Activated B cell treated with CpG ODN at 0.5 μM for 24 hours (primary cell): ENCODE measurements at regions of chr1 and their contacts with region 1.

Region 1: DNA sequence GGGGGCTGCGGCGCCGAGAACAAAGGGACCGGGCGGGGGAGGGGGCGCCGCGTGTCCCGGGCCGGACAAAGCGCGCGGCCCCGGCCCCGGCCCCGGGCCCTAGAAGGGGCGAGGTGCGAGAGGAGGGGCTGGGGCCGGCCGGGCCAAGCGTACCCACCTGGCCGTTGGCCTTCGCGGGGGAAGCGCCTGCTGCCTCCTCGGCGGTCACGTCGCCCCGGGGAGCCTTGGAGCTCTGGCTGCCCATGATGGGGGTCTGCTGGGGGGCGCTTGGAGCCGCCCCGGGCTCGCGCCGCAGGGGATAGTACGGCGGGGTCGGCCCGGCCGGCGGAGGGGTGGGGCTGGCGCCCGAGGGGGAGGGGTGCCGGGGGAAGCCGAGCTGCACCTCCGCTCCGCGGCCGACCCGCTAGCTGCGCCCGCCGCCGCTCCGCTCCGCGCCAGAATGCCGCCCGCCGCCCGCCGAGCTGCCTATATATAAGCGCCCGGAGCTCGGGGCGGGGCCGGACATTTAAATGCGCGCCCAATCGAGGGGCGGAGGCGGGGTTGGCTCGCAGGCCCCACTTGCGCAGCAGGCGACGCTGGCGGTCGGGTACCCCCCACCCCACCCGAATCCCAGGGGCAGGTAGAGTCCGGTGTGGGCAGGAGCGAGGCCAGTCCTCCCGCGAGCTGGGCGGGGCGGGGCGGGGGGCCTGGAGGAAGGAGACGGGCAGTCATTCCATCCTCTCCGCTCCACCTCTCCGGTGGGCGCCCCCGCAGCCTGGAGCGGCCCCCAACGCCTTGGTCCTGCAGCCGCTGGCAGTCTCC is at the start of gene MARCKSL1:
- DNase-seq: peak; percentile 90
- ATAC-seq: peak; percentile 54
- H3K4me3 Mint-ChIP-seq: peak within 1 kb of the TSS; percentile 86
- H3K27ac Mint-ChIP-seq: peak within 1 kb of the TSS; percentile 87
- H3K4me1 Mint-ChIP-seq: peaks cover 61% of the 10 kb centered on the region
- H3K27me3 Mint-ChIP-seq: no peaks in the 10 kb centered on the region
- CTCF ChIP-seq: no peak
- total RNA-seq, gene MARCKSL1: 132 TPM in 2 replicates

Region 2: DNA sequence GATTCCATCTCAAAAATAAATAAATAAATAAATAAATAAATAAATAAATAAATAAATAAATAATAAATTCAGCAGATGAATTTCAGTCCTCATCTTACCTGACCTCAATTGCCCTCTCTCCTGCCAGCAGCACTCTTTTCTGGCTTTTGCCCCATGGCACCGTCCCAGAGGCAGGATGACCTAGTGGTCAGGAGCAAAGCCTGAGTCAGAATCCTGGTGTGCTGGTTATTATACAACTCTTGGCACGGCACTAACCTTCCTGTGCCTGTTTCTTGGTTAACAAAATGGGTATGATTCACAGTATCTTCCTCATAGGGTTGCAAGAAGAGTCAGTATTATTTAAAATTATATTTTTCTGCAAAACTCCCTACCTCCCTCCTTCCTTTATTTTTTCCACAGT is 1139.3 kb before region 1 on chr1:
- CTCF ChIA-PET with region 1: no interaction called
- POLR2A ChIA-PET with region 1: no interaction called
- intact Hi-C with region 1: no loop called
- DNase-seq: no peak
- ATAC-seq: no peak
- H3K4me3 Mint-ChIP-seq: no peak overlapping the region
- H3K27ac Mint-ChIP-seq: no peak overlapping the region
- H3K4me1 Mint-ChIP-seq: no peaks in the 10 kb centered on the region
- H3K27me3 Mint-ChIP-seq: peaks cover 5% of the 10 kb centered on the region
- CTCF ChIP-seq: no peak

Region 3: DNA sequence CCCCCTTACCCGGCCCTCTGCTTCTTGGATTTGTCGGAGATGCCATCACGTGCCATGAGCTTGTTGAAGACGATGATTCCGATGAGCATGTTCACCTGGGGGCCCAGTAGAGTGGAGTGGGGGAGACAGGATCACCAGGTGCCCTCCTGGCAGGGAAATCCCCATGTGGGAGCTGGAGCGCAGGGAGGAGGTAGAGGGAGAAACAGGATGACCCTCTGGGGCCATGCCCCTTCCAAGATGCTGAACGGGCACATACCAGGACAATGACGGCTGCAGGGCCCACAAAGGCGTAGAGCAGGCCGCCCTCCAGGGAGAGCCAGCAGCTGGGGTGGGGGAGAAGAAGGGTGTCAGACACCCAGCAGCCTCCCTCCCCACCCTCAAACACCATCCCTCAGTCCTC is 600.4 kb before region 1 on chr1:
- CTCF ChIA-PET with region 1: no interaction called
- POLR2A ChIA-PET with region 1: interaction called, 11 read pairs
- intact Hi-C with region 1: no loop called
- DNase-seq: no peak
- ATAC-seq: no peak
- H3K4me3 Mint-ChIP-seq: no peak overlapping the region
- H3K27ac Mint-ChIP-seq: no peak overlapping the region
- H3K4me1 Mint-ChIP-seq: peaks cover 14% of the 10 kb centered on the region
- H3K27me3 Mint-ChIP-seq: no peaks in the 10 kb centered on the region
- CTCF ChIP-seq: no peak

Region 4: GRCh38 chr1:31843506-31843905 is 492.5 kb before region 1 on chr1:
- CTCF ChIA-PET with region 1: no interaction called
- POLR2A ChIA-PET with region 1: no interaction called
- intact Hi-C with region 1: no loop called
- DNase-seq: no peak
- ATAC-seq: no peak
- H3K4me3 Mint-ChIP-seq: no peak overlapping the region
- H3K27ac Mint-ChIP-seq: no peak overlapping the region
- H3K4me1 Mint-ChIP-seq: peaks cover 26% of the 10 kb centered on the region
- H3K27me3 Mint-ChIP-seq: no peaks in the 10 kb centered on the region
- CTCF ChIP-seq: no peak

Region 5: GRCh38 chr1:32179443-32180185 is 156.4 kb before region 1 on chr1 and contains the start of gene TXLNA:
- CTCF ChIA-PET with region 1: no interaction called
- POLR2A ChIA-PET with region 1: interaction called, 11 read pairs
- intact Hi-C with region 1: loop called (anchors 1 kb)
- DNase-seq: peak; percentile 89
- ATAC-seq: peak; percentile 91
- H3K4me3 Mint-ChIP-seq: peak within 1 kb of the TSS; percentile 90
- H3K27ac Mint-ChIP-seq: peak within 1 kb of the TSS; percentile 98
- H3K4me1 Mint-ChIP-seq: peaks cover 40% of the 10 kb centered on the region
- H3K27me3 Mint-ChIP-seq: no peaks in the 10 kb centered on the region
- CTCF ChIP-seq: no peak
- total RNA-seq, gene TXLNA: 52.0 and 54.1 TPM in 2 replicates

Region 6: GRCh38 chr1:32221980-32222755 is 113.8 kb before region 1 on chr1 and contains the starts of genes EIF3I and TMEM234:
- CTCF ChIA-PET with region 1: interaction called, 15 read pairs
- POLR2A ChIA-PET with region 1: interaction called, 26 read pairs
- intact Hi-C with region 1: loop called (anchors 1 kb)
- DNase-seq: peak; percentile 80
- ATAC-seq: peak; percentile 85
- H3K4me3 Mint-ChIP-seq: peak within 1 kb of the TSS; percentile 96
- H3K27ac Mint-ChIP-seq: peak within 1 kb of the TSS; percentile 95
- H3K4me1 Mint-ChIP-seq: peaks cover 50% of the 10 kb centered on the region
- H3K27me3 Mint-ChIP-seq: no peaks in the 10 kb centered on the region
- CTCF ChIP-seq: no peak
- total RNA-seq, gene EIF3I: 196 and 213 TPM in 2 replicates
- total RNA-seq, gene TMEM234: 31.8 and 35.5 TPM in 2 replicates

Region 7: GRCh38 chr1:32291708-32292492 is 44.1 kb before region 1 on chr1 and contains the start of gene HDAC1:
- CTCF ChIA-PET with region 1: no interaction called
- POLR2A ChIA-PET with region 1: interaction called, 59 read pairs
- intact Hi-C with region 1: loop called (anchors 1 kb)
- DNase-seq: peak; percentile 91
- ATAC-seq: peak; percentile 98
- H3K4me3 Mint-ChIP-seq: peak within 1 kb of the TSS; percentile 100
- H3K27ac Mint-ChIP-seq: peak within 1 kb of the TSS; percentile 98
- H3K4me1 Mint-ChIP-seq: peaks cover 48% of the 10 kb centered on the region
- H3K27me3 Mint-ChIP-seq: no peaks in the 10 kb centered on the region
- CTCF ChIP-seq: no peak
- total RNA-seq, gene HDAC1: 204 and 212 TPM in 2 replicates

Region 8: GRCh38 chr1:32351399-32352238 is 15.6 kb after region 1 on chr1:
- CTCF ChIA-PET with region 1: interaction called, 13 read pairs
- POLR2A ChIA-PET with region 1: interaction called, 121 read pairs
- intact Hi-C with region 1: loop called (anchors 1 kb)
- DNase-seq: peak; percentile 90
- ATAC-seq: peak; percentile 96
- H3K4me3 Mint-ChIP-seq: peak overlapping the region; percentile 91
- H3K27ac Mint-ChIP-seq: peak overlapping the region; percentile 91
- H3K4me1 Mint-ChIP-seq: peaks cover 22% of the 10 kb centered on the region
- H3K27me3 Mint-ChIP-seq: no peaks in the 10 kb centered on the region
- CTCF ChIP-seq: no peak

Region 9: GRCh38 chr1:32394141-32394889 is 58.3 kb after region 1 on chr1 and contains the start of gene BSDC1:
- CTCF ChIA-PET with region 1: interaction called, 9 read pairs
- POLR2A ChIA-PET with region 1: interaction called, 64 read pairs
- intact Hi-C with region 1: loop called (anchors 1 kb)
- DNase-seq: peak; percentile 97
- ATAC-seq: peak; percentile 99
- H3K4me3 Mint-ChIP-seq: peak within 1 kb of the TSS; percentile 100
- H3K27ac Mint-ChIP-seq: peak within 1 kb of the TSS; percentile 98
- H3K4me1 Mint-ChIP-seq: peaks cover 27% of the 10 kb centered on the region
- H3K27me3 Mint-ChIP-seq: no peaks in the 10 kb centered on the region
- CTCF ChIP-seq: no peak
- total RNA-seq, gene BSDC1: 51.8 and 72.2 TPM in 2 replicates

Region 10: DNA sequence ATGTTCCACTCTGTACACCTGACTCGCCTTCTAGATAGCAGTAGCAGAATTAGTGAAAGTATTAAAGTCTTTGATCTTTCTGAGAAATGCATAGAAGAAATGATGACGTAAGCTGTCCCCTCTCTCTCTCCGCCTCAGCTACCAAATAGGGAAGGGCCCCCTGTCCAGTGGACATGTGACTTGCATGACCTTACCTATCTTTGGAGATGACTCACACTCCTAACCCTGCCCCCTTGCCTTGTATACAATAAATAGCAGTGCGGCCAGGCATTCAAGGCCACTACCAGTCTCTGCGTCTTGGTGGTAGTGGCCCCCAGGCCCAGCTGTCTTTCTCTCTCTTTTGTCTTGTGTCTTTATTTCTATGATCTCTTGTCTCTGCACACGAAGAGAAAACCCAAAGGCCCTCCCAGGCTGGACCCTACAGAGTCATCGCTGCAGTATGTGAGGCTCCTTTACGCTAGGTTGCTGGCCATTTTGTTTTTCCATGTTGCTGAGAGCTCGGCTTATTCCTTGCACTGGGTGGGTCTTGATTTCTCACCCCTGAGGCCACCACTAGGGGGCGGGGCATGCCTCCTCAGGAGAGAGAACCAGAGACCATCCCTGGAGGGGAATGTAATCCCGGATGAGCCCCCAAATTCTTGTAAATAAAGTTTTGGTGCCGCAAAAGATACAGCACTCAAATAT is 112.9 kb after region 1 on chr1:
- CTCF ChIA-PET with region 1: no interaction called
- POLR2A ChIA-PET with region 1: no interaction called
- intact Hi-C with region 1: no loop called
- DNase-seq: no peak
- ATAC-seq: no peak
- H3K4me3 Mint-ChIP-seq: no peak overlapping the region
- H3K27ac Mint-ChIP-seq: no peak overlapping the region
- H3K4me1 Mint-ChIP-seq: no peaks in the 10 kb centered on the region
- H3K27me3 Mint-ChIP-seq: peaks cover 24% of the 10 kb centered on the region
- CTCF ChIP-seq: no peak